Activated CD4-positive, alpha-beta T cell treated with anti-CD3 and anti-CD28 coated beads, Interleukin-2, amount 10 ng/mL, durations not matched to agents 7 days and 5 days (primary cell): ENCODE measurements at regions of chr19 and their contacts with region 1.

Region 1: DNA sequence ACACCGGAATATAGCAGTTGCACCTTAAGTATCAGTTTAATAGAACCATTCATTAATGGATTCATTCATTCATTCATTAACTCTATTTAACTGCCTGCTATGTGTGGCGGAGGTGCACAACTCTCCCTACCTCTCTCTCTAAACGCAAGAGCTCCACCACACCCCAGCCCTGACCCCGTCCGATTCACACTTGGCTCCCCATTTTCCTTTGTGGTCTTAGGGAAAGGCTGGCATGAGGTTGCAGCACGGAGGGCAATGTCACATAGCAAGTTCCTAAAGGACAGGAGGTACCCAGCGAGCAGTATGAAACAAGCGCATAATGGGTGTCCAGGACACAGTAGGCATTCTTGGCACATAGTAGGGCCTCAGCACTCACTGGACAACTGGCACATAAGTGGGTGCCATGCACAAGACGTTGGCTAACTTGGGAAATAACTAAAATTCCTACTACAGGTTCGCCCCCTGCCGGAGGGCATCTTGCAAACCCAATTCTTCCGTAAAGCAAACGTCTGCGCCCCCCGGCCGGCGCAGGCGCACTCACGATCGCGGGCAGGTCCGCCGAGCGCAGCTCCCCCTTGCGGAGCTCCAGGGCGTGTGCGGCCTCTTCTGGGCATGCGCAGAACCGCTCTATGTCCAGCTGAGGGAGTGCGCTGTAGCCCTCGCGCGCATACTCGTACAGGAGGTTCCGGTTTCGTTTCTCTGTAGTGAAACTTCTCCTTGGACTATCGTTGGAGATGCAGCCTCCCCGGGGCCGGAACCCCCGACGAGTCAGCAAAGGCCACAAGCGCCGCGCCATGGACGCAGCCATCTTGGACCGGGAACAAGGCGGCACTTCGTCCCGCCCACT is at the start of gene SARS2:
- DNase-seq: peak; percentile 93
- H3K4me3 Mint-ChIP-seq: peak within 1 kb of the TSS; percentile 85
- H3K27ac Mint-ChIP-seq: peak within 1 kb of the TSS; percentile 93
- H3K4me1 Mint-ChIP-seq: peaks cover 34% of the 10 kb centered on the region
- H3K27me3 Mint-ChIP-seq: no peaks in the 10 kb centered on the region
- total RNA-seq, gene SARS2: 33.4 to 37.9 TPM

Region 2: DNA sequence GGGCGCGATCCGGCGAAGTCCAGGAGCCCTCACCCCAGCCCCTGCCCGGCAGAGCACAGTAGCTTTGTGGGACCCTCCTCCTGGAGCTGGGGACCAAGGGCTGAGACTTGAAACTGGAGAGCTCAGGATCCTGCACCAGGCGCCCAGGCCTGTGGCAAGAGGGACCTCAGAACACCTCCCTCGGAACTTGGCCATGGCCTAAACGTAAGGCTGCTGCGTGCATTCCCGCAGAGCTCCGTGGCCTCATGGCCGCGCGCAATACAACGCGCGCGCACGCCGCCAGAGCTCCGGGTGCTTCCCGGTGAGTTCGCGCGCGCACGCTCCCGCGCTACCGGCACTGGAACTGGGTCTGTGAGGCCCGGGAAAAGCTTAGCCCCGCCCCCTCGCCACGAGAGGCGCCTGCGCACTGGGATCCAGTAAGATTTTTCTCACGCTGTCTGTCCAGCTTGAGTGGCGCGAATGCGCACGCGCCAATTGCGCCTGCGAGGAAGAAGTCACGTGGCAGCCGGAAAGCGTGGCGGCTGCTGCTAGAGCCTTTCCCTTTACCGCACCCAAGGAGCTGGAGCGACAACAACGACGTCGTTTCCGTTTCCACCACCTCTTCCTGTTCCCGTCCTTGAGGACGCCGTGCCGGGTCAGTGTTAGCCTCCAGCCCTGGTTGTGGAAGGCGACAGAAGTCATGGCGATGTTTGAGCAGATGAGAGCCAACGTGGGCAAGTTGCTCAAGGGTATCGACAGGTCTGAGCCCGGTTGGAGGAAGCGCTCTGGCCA is 311.4 kb before region 1 on chr19 and contains the start of gene EIF3K:
- CTCF ChIA-PET with region 1: interaction called, 10 read pairs
- POLR2A ChIA-PET with region 1: no interaction called
- DNase-seq: peak; percentile 98
- H3K4me3 Mint-ChIP-seq: peak within 1 kb of the TSS; percentile 92
- H3K27ac Mint-ChIP-seq: peak within 1 kb of the TSS; percentile 92
- H3K4me1 Mint-ChIP-seq: peaks cover 50% of the 10 kb centered on the region
- H3K27me3 Mint-ChIP-seq: no peaks in the 10 kb centered on the region
- total RNA-seq, gene EIF3K: 309 to 318 TPM

Region 3: DNA sequence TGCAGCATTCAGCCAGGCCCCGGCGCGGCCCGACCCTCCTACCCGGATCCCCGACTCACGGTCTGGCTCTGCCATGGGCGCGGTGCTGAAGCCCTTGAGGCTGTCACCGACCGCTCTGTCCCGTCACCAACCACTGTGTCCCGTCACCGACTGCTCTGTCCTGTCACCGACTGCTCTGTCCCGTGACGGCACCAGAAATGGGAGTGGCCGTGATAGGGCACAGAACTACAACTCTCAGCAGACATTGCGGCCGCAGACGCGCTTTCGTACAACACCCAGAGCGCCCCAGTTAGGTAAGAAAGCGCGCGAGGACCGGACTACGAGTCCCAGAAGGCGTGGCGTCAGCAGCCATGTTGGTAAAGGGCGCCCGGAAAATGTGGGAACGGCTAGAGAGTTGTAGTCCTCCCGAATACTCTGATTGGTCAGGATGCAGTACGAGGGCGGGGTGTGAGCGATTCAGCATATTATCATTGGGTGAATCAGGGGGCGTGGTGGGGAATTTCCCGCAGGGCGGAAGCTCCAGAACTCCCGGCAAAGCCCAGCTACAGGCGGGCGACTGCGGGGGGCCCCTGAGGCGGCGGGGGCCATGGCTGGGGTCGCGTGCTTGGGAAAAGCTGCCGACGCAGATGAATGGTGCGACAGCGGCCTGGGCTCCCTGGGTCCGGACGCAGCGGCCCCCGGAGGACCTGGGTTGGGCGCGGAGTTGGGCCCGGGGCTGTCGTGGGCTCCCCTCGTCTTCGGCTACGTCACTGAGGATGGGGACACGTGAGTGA is 30.5 kb before region 1 on chr19 and contains the starts of genes NFKBIB and SIRT2:
- CTCF ChIA-PET with region 1: interaction called, 16 read pairs
- POLR2A ChIA-PET with region 1: no interaction called
- DNase-seq: peak; percentile 100
- H3K4me3 Mint-ChIP-seq: peak within 1 kb of the TSS; percentile 92
- H3K27ac Mint-ChIP-seq: peak within 1 kb of the TSS; percentile 96
- H3K4me1 Mint-ChIP-seq: peaks cover 41% of the 10 kb centered on the region
- H3K27me3 Mint-ChIP-seq: no peaks in the 10 kb centered on the region
- total RNA-seq, gene NFKBIB: 31.6 to 32.2 TPM
- total RNA-seq, gene SIRT2: 45.2 to 47.1 TPM

Region 4: DNA sequence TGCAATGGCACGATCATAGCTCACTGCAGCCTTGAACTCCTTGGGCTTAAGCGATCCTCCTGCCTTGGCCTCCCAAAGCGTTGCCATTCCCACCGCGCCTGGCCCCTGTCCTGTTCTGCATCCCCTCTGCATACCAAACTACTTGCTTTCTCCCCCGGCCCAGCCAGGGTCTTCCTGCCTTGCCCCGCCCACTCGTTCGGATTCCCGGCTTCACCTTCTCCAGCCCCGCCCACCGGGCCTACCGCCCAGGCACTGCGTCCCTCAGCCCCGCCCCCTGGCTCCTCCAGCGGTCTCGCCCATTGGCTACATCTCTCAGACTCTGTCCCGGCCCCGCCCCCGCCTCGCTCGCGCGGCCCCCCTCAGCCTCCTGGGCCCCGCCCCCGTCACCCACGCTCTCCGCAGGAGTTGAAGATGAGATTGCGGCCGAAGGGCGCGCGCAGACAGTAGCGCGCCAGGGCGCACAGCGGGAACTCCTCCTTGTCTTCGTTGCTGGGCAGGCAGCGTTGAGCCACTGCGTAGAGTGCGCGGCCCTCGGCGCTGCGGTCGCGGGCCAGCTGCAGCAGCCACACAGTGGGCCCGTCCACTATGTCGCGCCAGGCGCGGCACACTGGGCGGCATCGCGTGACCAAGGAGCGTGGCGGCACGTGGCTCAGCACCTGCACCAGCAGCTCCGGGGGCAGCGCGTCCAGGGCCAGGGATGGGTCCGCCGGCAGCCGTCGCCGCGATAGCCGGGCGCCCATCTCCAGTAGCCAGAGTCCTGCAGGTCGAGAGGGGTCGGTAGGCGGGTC is 19.6 kb after region 1 on chr19:
- CTCF ChIA-PET with region 1: interaction called, 10 read pairs
- POLR2A ChIA-PET with region 1: no interaction called
- DNase-seq: peak; percentile 81
- H3K4me3 Mint-ChIP-seq: peak overlapping the region; percentile 47
- H3K27ac Mint-ChIP-seq: no peak overlapping the region
- H3K4me1 Mint-ChIP-seq: peaks cover 15% of the 10 kb centered on the region
- H3K27me3 Mint-ChIP-seq: peaks cover 29% of the 10 kb centered on the region